Prostate gland (tissue), 2 donors: ENCODE measurements at regions of chr4 and their contacts with region 1.

Region 1: DNA sequence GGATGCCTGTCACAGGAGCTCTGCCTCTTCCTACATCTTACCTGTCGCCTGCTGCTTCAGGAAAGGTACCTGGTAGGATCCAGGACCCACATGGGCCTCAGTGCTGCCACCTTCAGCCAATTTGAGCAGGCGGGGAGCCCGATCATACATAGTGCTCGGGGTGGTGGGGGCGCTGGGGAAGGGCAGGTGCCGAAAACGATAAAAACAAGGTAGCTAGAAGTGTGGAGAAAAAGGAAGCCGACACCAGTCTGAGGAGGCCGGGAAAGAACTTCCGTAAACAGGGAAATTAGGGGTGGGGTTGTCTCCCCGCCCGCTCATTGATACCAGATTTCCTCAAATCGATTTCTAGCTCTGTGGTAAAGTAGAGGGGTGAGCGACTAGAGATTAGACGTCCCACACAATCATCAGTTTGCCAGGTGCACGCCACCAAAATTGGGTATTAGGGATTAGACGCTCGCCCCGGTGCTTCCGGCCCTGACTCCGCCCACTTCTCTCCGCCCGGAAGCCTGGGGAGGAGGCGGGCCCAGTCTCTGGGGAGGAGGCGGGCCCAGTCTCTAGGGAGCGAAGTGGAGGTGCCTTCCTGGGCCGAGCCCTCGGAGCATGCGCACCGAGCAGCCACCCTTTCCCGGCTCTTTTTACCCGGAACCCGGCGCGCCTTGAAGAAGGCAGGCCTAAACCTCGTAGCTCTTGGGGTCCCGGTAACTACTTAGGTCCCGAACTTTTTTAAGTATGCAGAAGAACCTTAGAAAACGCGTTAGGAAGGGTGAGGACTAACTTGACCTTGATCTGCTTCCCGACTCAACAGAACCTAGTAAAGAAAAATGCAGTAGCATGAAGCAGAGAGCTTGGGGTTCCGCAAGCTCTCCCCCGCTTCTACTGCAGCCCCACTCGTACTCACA is at the start of gene STPG2:
- DNase-seq: peak; percentile 88
- H3K4me3 ChIP-seq: peak within 1 kb of the TSS; percentile 46 to 60
- H3K27ac ChIP-seq: peak within 1 kb of the TSS; percentile 90 to 92
- H3K4me1 ChIP-seq: no peaks in the 10 kb centered on the region
- H3K27me3 ChIP-seq: no peaks in the 10 kb centered on the region
- CTCF ChIP-seq: peak in 3 of 4 experiments; percentile 37 to 50 (median 43)
- POLR2A ChIP-seq: peak; percentile 41
- total RNA-seq, gene STPG2: 0.77 to 1.1 TPM

Region 2: DNA sequence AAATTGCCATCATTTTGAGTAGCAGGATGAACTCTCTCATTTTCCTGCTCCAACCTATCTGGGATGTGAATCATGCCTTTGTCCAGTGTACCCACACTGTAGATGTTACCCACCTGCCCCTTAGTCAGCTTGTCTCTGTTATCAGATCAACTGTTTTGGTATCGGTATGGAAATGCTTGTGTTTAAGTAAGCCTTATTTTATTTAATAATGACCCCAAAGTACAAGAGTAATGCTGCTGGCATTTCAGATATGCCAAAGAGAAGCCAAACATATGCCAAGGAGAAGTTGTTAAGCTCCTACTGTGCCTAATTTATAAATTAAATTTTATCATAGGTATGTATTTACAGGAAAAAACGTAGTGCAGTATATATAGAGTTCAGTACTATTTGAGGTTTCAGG is 99.3 kb after region 1 on chr4:
- intact Hi-C with region 1: no loop called
- DNase-seq: no peak
- H3K4me3 ChIP-seq: no peak overlapping the region
- H3K27ac ChIP-seq: no peak overlapping the region
- H3K4me1 ChIP-seq: no peaks in the 10 kb centered on the region
- H3K27me3 ChIP-seq: no peaks in the 10 kb centered on the region
- CTCF ChIP-seq: no peak
- POLR2A ChIP-seq: no peak

Region 3: DNA sequence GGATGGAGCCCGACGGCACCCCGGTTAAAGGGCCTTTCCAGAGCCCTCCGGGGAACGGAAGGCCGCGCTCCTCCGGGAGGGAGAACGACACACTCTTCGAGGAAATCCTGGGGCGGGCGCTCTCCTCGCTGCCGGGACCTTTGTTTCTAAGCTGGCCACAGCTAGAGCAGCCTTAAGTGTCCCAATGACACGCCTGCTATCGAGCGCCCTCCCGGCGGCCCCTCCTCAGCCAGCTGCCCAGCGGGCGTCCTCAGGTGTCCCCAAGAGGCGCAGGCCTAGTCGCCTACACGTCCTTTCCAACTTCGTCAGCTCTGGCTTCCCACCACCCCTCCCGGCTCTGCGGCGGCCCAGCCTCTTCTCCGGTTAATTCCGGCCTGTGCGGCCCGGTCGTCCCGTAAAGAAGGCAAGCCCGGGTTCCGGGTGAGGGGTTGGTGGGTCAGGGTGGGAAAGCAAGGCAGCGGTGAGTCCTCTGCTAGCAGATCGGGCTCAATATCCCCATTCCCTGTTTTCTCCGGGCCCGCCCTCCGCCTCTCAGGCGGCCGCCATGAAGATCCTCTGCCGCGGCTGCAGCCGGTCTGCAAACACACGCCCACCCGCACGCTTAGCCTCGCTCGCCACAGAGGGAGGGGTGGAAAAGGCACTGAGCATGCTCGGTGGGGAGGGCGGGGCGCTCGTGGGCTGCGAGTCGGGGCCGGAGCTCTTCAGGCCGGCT is 117.5 kb after region 1 on chr4:
- intact Hi-C with region 1: loop called (anchors 5 kb)
- DNase-seq: peak; percentile 94
- H3K4me3 ChIP-seq: peak overlapping the region; percentile 74 to 83
- H3K27ac ChIP-seq: peak overlapping the region; percentile 96 to 97
- H3K4me1 ChIP-seq: no peaks in the 10 kb centered on the region
- H3K27me3 ChIP-seq: no peaks in the 10 kb centered on the region
- CTCF ChIP-seq: no peak
- POLR2A ChIP-seq: peak; percentile 96

Region 4: DNA sequence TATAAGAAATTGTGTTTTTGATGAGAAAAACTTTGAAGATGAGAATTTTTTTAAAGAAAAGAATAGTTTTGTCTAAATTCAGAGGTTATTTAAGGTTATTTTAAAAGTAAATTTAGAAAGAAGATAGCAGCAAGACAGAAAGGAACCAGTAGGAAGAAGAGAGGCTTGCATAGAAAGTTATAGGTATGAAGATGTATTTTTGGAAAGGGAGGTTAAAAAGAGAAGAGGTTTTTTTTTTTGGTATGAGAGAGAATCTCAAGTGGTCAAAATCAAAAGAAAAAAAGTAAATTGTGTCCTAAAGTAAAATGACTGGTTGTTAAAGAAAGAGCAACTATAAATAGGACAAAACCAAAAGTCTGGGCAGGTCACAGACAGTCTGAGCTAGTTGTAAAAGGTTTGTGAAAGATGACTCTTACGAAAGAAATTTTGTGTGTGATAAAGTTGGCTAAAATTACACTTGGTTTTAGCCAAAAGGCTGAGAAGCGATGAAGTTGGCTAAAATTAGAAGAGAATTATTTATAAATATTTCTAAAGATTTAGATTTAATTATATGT is 802.1 kb after region 1 on chr4:
- intact Hi-C with region 1: no loop called
- DNase-seq: no peak
- H3K4me3 ChIP-seq: no peak overlapping the region
- H3K27ac ChIP-seq: no peak overlapping the region
- H3K4me1 ChIP-seq: no peaks in the 10 kb centered on the region
- H3K27me3 ChIP-seq: no peaks in the 10 kb centered on the region
- CTCF ChIP-seq: no peak
- POLR2A ChIP-seq: no peak